Kidney (tissue), 22 donors: ENCODE measurements at regions of chr9 and their contacts with region 1.

Region 1: DNA sequence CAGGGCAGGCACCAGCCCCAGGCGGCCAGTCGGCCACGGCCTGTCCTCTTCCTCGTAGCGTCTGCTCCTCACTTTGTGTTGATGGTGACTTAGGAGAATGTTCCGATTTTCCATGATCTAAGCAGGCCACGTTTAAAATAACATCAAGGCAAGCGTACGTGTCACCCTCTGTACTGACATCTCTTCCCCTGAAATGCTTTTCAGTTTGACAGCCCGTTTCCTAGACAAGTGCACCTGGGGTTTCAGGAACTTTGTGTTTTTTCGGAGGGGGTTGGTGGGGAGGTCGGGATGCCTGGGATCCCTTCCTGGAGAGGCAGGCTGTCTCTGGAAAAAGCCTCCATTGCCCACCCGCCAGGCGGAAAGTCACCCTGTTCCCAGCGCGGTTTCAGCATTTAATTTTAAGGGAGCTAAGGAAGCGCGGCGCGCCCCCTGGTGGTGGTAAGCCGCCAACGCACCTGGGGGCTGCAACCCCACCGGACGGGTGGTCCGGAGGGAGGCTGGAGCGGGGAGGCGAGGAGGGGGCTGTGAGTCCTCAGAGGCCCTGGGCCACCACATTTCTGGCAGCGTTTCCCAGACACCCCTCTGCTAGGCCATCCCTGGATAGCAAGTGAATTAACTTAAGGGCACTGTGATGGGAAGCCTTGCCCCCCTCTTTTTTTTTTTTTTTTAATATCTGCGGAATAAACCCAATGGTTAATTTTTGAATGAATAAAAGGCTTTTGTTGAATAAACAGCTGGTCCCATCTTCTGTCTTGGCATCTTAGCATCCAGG is 29.5 kb upstream of the HMCN2 start:
- DNase-seq: peak in 4 of 5 donors; percentile 85 to 90 (median 88)
- H3K4me3 ChIP-seq: no peak overlapping the region
- H3K27ac ChIP-seq: no peak overlapping the region
- H3K4me1 ChIP-seq: peaks cover 0 to 4% (median 0%) of the 10 kb centered on the region in 3 donors
- H3K27me3 ChIP-seq: no peaks in the 10 kb centered on the region
- CTCF ChIP-seq: peak; percentile 96

Region 2: DNA sequence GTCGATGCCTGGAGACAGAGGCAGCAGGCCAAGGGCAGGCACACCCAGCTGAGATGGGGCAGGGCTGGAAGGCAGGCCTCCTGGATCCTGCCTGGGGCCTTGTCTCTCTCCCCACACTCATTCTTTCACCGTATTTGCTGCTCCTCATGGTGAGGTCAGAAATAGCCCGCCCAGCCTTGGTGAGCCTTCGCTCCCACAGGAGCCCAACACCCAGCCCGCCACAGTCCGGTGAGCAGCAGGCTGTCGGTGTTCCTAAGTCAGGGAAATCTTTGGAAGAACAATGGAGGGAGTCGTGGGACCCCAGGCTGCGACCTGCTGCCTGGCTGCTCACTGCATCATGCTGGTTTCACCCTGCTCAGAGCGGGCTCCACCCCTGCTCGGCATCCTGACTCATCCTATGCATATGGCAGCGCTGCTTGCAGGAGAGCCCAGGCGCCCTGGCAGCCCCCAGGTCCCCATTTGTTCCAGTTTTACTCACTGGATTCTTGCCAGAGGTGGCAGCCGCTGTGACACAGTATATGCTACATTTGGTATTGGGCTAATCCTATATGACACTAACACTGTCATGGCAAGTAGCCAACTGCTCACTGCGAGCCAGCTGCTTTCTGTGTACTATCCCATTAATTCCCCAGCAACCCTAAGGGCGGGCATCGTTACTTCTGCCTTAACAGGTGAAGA is 117.1 kb before region 1 on chr9:
- intact Hi-C with region 1: loop called (anchors 10 kb)
- DNase-seq: peak in 4 of 5 donors; percentile 46 to 91 (median 60)
- H3K4me3 ChIP-seq: no peak overlapping the region
- H3K27ac ChIP-seq: no peak overlapping the region
- H3K4me1 ChIP-seq: peaks cover 0 to 7% (median 0%) of the 10 kb centered on the region in 3 donors
- H3K27me3 ChIP-seq: no peaks in the 10 kb centered on the region
- CTCF ChIP-seq: no peak

Region 3: DNA sequence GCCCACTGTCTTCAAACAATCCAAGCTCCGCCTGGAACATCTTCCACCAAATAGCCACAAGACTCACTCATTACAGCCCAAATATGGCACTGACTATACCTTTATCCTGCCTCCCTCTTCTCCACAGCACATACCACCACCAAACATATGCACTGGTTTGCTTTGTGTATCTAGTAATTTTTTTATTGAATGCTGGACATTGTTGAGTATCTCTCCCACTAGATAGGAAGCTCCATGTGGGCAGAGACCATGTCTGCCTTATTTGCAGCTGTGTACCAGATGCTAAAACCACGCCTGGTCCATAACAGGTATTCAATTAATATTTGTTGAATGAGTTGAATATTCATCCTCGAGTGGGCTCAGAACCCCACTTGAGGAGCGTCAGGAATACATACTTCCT is 276.1 kb after region 1 on chr9:
- intact Hi-C with region 1: no loop called
- DNase-seq: no peak
- H3K4me3 ChIP-seq: no peak overlapping the region
- H3K27ac ChIP-seq: no peak overlapping the region
- H3K4me1 ChIP-seq: no peaks in the 10 kb centered on the region
- H3K27me3 ChIP-seq: no peaks in the 10 kb centered on the region
- CTCF ChIP-seq: no peak